ENCODE measurements at regions of chr3 and their contacts with region 1.

Region 1: GRCh38 chr3:53729618-53730017 is 116.6 kb downstream of the CHDH start:
- DNase-seq: no peak
- ATAC-seq: peak; percentile 91
- H3K4me3 ChIP-seq: no peak overlapping the region
- H3K27ac ChIP-seq: no peak overlapping the region
- H3K4me1 ChIP-seq: peaks cover 10% of the 10 kb centered on the region
- H3K27me3 ChIP-seq: no peaks in the 10 kb centered on the region
- CTCF ChIP-seq: peak; percentile 31 to 52 (median 34); a peak in 5 of 6 replicates
- EP300 ChIP-seq: no peak
- POLR2A ChIP-seq: no peak
- RAD21 ChIP-seq: peak; percentile 43

Region 2: GRCh38 chr3:53748512-53749271 is 19.1 kb after region 1 on chr3:
- CTCF ChIA-PET with region 1: interaction called, 5 read pairs
- POLR2A ChIA-PET with region 1: no interaction called
- RAD21 ChIA-PET with region 1: interaction called, 5 read pairs
- SMC1A ChIA-PET with region 1: interaction called, 12 read pairs
- in situ Hi-C with region 1: no loop called
- intact Hi-C with region 1: no loop called
- DNase-seq: peak; percentile 79
- ATAC-seq: peak; percentile 86
- H3K4me3 ChIP-seq: peak overlapping the region; percentile 44; the same call in 1 of the 2 replicates
- H3K27ac ChIP-seq: peak overlapping the region; percentile 92
- H3K4me1 ChIP-seq: peaks cover 55% of the 10 kb centered on the region
- H3K27me3 ChIP-seq: no peaks in the 10 kb centered on the region
- CTCF ChIP-seq: no peak
- EP300 ChIP-seq: peak; percentile 51 to 54; a peak in 2 of 4 replicates
- POLR2A ChIP-seq: no peak
- RAD21 ChIP-seq: no peak

Region 3: GRCh38 chr3:53800036-53800906 is 70.7 kb after region 1 on chr3:
- CTCF ChIA-PET with region 1: no interaction called
- POLR2A ChIA-PET with region 1: no interaction called
- RAD21 ChIA-PET with region 1: no interaction called
- SMC1A ChIA-PET with region 1: no interaction called
- in situ Hi-C with region 1: no loop called
- intact Hi-C with region 1: no loop called
- DNase-seq: no peak
- ATAC-seq: no peak
- H3K4me3 ChIP-seq: no peak overlapping the region
- H3K27ac ChIP-seq: no peak overlapping the region
- H3K4me1 ChIP-seq: peaks cover 4% of the 10 kb centered on the region
- H3K27me3 ChIP-seq: no peaks in the 10 kb centered on the region
- CTCF ChIP-seq: no peak
- EP300 ChIP-seq: no peak
- POLR2A ChIP-seq: no peak
- RAD21 ChIP-seq: no peak

Region 4: DNA sequence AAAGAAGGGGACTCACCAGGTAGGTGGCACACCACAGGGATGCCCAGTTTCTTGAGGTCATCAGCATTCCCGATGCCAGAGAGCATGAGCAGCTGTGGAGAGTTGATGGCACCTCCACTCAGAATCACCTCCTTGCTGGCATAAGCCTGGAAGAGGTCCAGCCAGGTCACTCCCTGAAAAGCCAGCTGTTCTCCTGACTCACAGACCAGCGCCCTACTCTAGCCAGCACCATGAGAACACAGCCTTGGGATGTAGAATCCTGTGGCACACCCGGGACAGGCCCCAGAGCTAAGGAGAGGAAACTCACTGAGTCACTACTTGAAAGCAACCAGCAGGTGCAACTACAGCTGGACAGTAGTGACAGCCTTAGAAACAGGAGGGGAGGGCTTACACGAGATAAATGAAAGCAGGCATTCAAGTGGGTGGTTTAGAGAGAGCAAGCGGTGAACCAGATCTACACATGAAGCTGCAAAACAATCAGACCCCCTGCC is 92.1 kb after region 1 on chr3:
- CTCF ChIA-PET with region 1: no interaction called
- POLR2A ChIA-PET with region 1: no interaction called
- RAD21 ChIA-PET with region 1: no interaction called
- SMC1A ChIA-PET with region 1: no interaction called
- in situ Hi-C with region 1: no loop called
- intact Hi-C with region 1: no loop called
- DNase-seq: no peak
- ATAC-seq: peak; percentile 65
- H3K4me3 ChIP-seq: no peak overlapping the region
- H3K27ac ChIP-seq: no peak overlapping the region
- H3K4me1 ChIP-seq: no peaks in the 10 kb centered on the region
- H3K27me3 ChIP-seq: no peaks in the 10 kb centered on the region
- CTCF ChIP-seq: no peak
- EP300 ChIP-seq: no peak
- POLR2A ChIP-seq: no peak
- RAD21 ChIP-seq: no peak

Region 5: DNA sequence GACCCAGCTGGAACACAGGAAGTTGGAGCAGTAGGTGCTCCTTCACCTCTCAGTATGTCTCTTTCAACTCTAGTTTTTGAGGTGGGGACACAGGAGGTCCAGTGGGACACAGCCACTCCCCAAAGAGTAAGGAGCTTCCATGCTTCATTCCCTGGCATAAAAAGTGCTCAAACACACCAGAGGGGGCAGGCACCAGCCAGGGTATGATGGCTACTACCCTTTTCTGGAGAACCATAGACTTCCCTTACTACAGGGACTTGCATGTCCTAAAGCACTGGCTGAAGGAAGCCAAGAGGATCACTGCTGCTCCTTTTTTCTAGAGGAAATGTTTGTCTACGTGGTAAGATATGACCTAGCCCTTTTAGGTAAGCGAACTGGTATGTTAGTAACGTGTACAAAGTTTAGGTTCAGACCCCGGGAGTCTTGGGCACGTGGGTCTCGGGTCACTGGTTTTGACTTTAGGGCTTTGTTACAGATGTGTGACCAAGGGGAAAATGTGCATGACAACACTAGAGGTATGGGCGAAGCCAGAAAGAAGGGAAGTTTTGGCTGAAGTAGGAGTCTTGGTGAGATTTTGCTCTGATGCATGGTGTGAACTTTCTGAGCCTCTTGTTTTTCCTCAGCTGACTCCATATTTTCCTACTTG is 128.6 kb after region 1 on chr3:
- CTCF ChIA-PET with region 1: interaction called, 15 read pairs
- POLR2A ChIA-PET with region 1: no interaction called
- RAD21 ChIA-PET with region 1: no interaction called
- SMC1A ChIA-PET with region 1: interaction called, 7 read pairs
- in situ Hi-C with region 1: no loop called
- intact Hi-C with region 1: no loop called
- DNase-seq: no peak
- ATAC-seq: no peak; the same call in 2 of the 3 replicates
- H3K4me3 ChIP-seq: no peak overlapping the region
- H3K27ac ChIP-seq: no peak overlapping the region
- H3K4me1 ChIP-seq: peaks cover 14% of the 10 kb centered on the region
- H3K27me3 ChIP-seq: no peaks in the 10 kb centered on the region
- CTCF ChIP-seq: no peak
- EP300 ChIP-seq: no peak
- POLR2A ChIP-seq: no peak
- RAD21 ChIP-seq: no peak

Region 6: DNA sequence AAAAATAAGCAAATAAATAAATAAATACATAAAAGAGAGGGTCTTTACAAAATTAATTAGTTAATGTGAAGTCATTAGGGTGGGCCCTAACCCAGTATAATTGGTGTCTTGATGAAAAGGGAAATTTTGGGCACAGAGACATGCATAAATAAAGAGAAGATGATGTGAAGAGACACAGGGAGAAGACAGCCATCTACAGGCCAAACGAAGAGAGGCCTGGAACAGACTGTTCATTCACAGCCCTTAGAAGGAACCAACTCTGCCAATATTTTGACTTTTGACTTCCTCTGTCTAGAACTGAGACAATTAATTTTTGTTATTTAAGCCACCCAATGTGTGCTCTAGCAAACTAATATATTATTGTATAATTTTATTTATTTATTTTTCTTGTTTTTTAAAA is 191.7 kb after region 1 on chr3:
- CTCF ChIA-PET with region 1: interaction called, 4 read pairs
- POLR2A ChIA-PET with region 1: no interaction called
- RAD21 ChIA-PET with region 1: interaction called, 3 read pairs
- SMC1A ChIA-PET with region 1: interaction called, 4 read pairs
- in situ Hi-C with region 1: no loop called
- intact Hi-C with region 1: loop called (anchors 5 kb)
- DNase-seq: no peak
- ATAC-seq: peak; percentile 81
- H3K4me3 ChIP-seq: no peak overlapping the region
- H3K27ac ChIP-seq: no peak overlapping the region
- H3K4me1 ChIP-seq: no peaks in the 10 kb centered on the region
- H3K27me3 ChIP-seq: no peaks in the 10 kb centered on the region
- CTCF ChIP-seq: peak; percentile 51 to 58 (median 56); a peak in 5 of 6 replicates
- EP300 ChIP-seq: no peak
- POLR2A ChIP-seq: no peak
- RAD21 ChIP-seq: peak; percentile 50